ENCODE measurements at regions of chr17 and their contacts with region 1.

Region 1: GRCh38 chr17:65100316-65101140 is 36.6 kb upstream of the RGS9 start:
- DNase-seq: peak; percentile 66
- H3K4me3 ChIP-seq: peak overlapping the region in 2 of 3 experiments; percentile 19 to 51
- H3K27ac ChIP-seq: peak overlapping the region; percentile 30
- H3K4me1 ChIP-seq: peaks cover 34% of the 10 kb centered on the region
- H3K27me3 ChIP-seq: no peaks in the 10 kb centered on the region
- CTCF ChIP-seq: peak; percentile 48 to 86

Region 2: DNA sequence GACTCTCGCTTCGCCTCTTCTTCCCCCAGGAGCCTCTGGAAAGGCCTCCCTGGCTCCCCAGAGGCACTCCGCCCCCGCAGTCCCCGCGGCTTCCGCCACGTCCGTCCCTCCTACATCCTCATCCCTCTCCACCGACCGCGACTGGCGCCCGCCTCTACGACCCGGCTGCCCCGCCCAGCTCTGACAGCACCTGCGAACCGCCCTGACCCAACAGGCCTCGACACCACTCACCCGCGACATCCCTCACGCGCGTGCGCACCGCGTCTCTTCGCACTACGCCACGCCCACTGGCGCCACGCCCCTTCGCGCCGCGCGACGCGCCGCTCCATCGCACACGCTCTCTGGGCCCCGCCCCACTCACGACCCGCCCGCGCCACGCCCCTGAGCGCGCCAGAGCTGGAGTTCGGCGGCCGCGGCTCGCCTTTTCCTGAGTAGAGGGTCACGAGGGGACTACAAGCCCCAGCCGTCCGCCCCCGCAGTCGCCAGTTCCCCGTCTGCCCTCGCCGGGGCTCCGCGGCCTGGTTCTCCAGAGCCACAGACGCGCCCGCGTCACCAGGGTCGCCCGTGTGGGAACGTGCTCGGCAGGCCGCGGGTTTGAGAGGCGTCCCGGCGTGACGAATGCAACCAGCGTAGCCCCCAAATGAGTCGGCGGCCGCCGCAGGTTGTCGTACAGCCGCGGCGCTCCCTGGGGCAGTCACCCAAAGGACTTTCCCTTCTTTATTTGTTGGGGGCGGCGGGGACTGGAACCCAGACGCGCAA is 125.0 kb before region 1 on chr17:
- CTCF ChIA-PET with region 1: no interaction called
- dilution Hi-C with region 1: no loop called
- in situ Hi-C with region 1: loop called in 1 of 2 experiments (anchors 25 kb)
- intact Hi-C with region 1: loop called (anchors 1 kb)
- DNase-seq: peak; percentile 94
- H3K4me3 ChIP-seq: peak overlapping the region; percentile 49 to 74 (median 62)
- H3K27ac ChIP-seq: peak overlapping the region; percentile 82
- H3K4me1 ChIP-seq: peaks cover 23% of the 10 kb centered on the region
- H3K27me3 ChIP-seq: no peaks in the 10 kb centered on the region
- CTCF ChIP-seq: no peak

Region 3: DNA sequence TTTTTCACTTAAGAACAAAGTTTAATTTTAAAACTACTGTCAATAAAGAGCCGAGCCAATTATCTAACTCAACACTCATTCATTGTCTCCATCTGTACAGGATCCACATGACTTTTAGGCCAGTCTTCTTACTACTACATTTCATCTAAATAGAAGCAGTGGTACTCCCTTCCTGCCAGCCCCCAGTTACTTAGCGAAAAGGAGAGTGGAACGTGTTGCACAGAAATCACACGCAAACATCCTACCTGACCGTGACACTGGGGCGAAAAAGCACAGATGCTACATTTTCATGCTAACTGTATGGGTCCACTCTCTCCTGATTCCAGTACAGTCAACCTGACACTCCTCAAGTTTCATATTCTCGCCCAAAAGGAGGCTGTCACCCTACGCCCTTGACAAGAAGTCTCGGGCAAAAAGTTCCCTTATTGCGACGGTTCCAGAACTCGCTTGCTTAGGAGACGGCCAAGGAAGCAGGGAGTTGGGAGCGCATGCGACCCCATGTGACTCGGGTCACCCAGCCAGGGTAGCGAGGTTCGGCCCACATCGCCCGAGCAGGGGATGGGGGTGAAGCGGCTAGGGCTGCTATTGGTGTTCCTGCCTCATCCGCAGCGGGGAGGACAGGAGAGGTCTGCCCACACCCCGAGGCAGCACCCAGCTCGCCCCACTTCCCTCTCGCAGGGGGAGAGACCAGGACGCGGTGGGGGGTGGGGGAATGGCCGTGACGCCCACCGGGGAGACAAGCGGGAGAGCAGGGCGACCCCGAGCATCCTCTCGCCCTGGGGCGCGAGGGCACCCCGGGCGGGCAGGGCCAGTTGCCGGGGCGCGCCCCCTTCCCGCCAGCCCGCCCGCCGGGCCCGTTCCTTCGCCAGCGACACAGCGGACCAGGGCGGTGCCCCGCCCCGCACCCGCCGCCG is 44.9 kb before region 1 on chr17:
- CTCF ChIA-PET with region 1: interaction called, 16 read pairs
- dilution Hi-C with region 1: loop called (anchors 5 kb)
- in situ Hi-C with region 1: loop called in 1 of 2 experiments (anchors 5 kb)
- intact Hi-C with region 1: loop called (anchors 1 kb)
- DNase-seq: peak; percentile 47
- H3K4me3 ChIP-seq: peak overlapping the region; percentile 64 to 84 (median 83)
- H3K27ac ChIP-seq: peak overlapping the region; percentile 84
- H3K4me1 ChIP-seq: peaks cover 32% of the 10 kb centered on the region
- H3K27me3 ChIP-seq: no peaks in the 10 kb centered on the region
- CTCF ChIP-seq: no peak

Region 4: DNA sequence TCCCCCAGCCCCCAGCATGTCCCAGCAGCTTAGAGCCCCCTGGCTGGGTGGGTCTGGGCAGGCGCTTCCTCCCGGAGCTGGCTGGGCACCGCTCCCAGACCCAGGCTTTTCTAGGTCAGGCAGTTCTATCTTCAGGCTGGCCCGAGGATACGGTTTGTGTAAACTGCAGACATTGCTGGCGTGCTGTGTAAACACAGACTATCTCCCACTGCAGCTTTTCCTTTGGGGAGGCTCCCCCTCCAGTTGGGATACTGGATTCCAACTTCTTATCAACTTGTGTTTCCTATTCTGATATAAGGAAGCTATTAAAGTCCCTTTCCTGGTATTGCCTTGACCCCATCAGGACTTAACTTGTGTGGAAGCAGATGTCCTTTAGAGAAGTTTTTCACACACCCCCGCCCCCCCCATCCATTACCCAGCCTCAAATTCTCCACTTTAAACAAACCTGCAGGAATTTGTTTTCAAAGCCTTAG is 25.7 kb before region 1 on chr17:
- CTCF ChIA-PET with region 1: interaction called, 19 read pairs
- dilution Hi-C with region 1: no loop called
- in situ Hi-C with region 1: no loop called
- intact Hi-C with region 1: no loop called
- DNase-seq: no peak
- H3K4me3 ChIP-seq: no peak overlapping the region
- H3K27ac ChIP-seq: no peak overlapping the region
- H3K4me1 ChIP-seq: peaks cover 34% of the 10 kb centered on the region
- H3K27me3 ChIP-seq: no peaks in the 10 kb centered on the region
- CTCF ChIP-seq: no peak

Region 5: DNA sequence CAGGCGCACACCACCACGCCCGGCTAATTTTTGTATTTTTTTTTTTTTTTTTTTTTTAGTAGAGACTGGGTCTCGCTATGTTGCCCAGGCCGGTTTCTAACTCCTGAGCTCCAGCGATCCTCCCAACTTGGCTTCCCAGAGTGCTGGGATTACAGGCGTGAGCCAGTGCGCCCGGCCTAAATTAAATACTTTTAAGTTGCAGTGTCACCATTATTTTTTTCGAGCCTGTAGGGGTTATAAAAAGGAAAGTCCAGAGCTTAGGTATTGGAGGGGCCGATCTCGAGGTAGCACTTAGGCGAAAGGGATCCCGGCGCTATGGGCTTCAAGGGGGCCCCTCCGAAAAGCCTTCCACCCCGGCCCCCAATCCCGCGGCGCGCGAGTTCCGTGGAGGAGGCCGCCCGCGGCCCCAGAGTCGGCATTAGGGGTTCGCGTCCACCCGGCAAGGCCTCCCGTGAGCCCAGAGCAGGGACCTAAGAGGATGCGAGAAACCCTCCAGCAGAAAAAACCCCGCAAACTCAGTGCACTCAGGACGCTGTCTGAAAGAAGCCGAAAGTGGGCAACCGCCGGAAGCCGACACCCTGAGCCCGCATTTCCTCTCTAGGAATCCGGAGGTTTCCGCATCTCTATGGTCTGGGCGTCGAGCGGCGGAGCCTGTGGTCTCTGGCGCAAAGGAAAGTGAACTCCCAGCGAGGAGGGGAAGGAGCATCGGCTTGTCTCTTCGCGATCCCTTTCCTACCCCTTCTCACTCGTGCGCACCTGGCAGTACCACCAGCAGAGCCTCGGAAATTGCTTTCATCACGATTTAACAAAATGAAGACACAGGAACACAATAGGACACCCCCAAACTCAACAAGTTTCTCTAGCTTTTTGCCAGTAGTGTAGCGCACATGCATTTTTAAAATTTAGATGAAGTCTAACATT is 22.6 kb after region 1 on chr17:
- CTCF ChIA-PET with region 1: no interaction called
- dilution Hi-C with region 1: no loop called
- in situ Hi-C with region 1: no loop called
- intact Hi-C with region 1: no loop called
- DNase-seq: peak; percentile 81
- H3K4me3 ChIP-seq: peak overlapping the region; percentile 50 to 70 (median 65)
- H3K27ac ChIP-seq: peak overlapping the region; percentile 65
- H3K4me1 ChIP-seq: peaks cover 12% of the 10 kb centered on the region
- H3K27me3 ChIP-seq: no peaks in the 10 kb centered on the region
- CTCF ChIP-seq: no peak

Measured in mammary epithelial cell (primary cell).